ENCODE measurements at regions of chr9 and their contacts with region 1.

Region 1: GRCh38 chr9:21789541-21790037 is 12.8 kb upstream of the MTAP start:
- DNase-seq: peak; percentile 58
- CTCF ChIP-seq: peak; percentile 78

Region 2: DNA sequence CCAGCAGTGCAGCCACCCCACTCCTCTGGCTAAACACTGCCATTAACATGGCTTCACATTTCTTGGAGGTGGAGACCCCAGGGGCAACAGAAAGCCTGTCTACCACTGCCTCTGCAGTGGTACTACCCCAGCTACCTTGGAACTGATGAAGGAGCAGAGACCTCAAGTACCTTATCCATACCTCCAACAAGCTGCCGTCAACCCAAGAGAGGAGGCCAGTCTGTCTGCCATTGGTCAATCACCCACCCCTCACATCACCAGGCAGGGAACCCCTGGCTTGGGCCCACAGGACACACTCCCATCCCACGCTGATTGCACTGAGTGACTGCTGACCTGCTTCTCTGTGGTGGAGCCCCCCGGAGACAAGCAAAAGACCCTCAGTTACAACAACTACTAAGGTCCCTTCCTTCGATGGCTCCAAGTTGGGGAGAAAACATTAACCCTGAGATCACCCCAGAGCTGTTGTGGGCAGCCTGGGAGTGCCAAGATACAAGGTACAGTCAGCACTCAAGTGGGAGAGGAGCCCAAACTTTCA is 555.4 kb before region 1 on chr9:
- CTCF ChIA-PET with region 1: interaction called, 11 read pairs
- POLR2A ChIA-PET with region 1: no interaction called
- DNase-seq: no peak
- CTCF ChIP-seq: no peak

Region 3: GRCh38 chr9:21465859-21466518 is 323.6 kb before region 1 on chr9:
- CTCF ChIA-PET with region 1: interaction called, 24 read pairs
- POLR2A ChIA-PET with region 1: no interaction called
- DNase-seq: peak; percentile 54
- CTCF ChIP-seq: peak; percentile 78

Region 4: GRCh38 chr9:21542787-21543186 is 246.8 kb before region 1 on chr9:
- CTCF ChIA-PET with region 1: no interaction called
- POLR2A ChIA-PET with region 1: no interaction called
- DNase-seq: no peak
- CTCF ChIP-seq: no peak

Region 5: GRCh38 chr9:21677834-21678233 is 111.8 kb before region 1 on chr9:
- CTCF ChIA-PET with region 1: no interaction called
- POLR2A ChIA-PET with region 1: no interaction called
- DNase-seq: no peak
- CTCF ChIP-seq: no peak

Region 6: DNA sequence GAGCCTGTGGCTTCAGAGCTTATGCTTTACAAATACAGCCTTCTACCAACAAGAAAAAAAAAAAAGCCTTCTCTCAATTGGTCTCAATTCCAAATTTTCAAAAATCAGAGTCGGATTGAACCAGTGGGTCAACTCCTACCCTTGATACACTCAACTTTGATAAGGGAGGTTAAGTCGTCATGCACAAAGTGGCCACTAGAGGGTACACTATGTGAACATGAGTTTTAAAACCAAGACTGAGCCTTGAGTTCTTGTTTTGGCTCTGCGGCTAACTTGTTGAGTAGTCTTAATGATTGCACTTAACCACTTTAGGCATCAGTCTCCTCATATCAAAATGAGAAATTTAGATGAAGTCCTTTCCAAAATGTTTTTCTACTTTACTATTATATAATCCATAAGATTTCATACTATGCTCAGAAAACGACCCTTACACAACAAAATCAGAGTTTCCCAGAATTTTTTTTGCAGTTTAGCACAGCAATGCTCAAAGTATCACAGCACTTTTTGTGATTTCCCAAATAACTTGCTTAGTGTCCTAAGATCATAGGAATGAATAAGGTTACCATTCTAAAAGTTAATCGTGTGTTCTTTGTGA is 80.0 kb before region 1 on chr9:
- CTCF ChIA-PET with region 1: interaction called, 16 read pairs
- POLR2A ChIA-PET with region 1: no interaction called
- DNase-seq: peak; percentile 17
- CTCF ChIP-seq: peak; percentile 76

Region 7: GRCh38 chr9:21761309-21761901 is 28.2 kb before region 1 on chr9:
- CTCF ChIA-PET with region 1: no interaction called
- POLR2A ChIA-PET with region 1: no interaction called
- DNase-seq: peak; percentile 6
- CTCF ChIP-seq: no peak

Region 8: DNA sequence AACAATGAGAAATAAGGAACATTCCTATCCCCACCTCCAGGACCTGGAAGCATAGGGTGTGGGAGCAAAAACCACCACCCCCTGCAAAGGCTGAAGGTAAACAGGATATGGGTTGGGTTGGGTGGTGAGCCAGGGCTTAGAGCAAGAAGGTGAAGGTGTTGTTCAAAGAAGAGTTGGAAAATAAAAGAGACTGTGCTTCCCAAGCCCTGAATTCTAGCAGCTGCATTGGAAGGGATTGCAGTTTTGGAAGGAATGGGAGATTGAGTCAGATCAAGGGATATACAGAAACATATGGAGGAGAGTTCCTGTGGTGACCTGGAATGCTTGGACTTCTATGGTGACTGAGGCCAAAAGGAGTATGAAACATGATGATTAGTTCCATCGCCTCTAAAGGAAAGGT is 11.9 kb before region 1 on chr9:
- CTCF ChIA-PET with region 1: interaction called, 19 read pairs
- POLR2A ChIA-PET with region 1: no interaction called
- DNase-seq: no peak
- CTCF ChIP-seq: no peak

Region 9: DNA sequence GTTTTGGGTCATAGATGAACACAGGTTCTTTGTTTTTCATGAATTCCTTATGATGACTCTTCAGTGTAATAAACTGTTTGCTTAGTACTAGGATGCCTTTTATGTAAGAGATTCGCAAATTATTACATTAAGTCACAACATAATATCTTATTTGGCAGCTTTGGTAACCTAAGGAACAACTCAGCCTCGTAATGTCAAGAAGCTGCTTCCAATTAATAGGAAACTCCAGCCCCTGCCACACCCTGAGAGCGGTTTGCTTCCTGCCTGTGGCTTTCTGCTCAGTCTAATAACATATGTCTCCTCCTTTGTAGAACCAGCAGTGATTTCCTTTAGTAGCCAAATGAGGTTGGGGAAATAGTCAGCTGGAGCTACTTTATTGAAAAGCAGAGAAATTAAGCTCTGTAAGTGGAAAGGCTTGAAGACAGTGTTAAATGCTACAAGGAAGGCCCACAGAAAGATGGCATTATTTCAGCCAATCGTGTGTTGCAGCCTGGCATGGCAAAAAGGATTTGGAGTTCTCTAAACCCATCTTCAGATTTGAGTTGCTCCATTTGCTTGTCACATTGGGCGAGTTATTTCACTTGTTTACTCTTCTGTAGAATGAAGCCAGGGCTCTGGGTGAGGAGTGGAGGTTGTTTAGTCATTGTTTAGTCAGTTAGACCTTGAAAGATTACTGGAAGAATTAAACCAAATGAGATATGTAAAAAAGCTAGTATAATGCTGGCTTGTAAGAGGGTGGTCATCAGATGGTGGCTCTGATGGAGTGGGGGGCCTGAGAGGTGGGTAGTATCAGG is 66.9 kb after region 1 on chr9:
- CTCF ChIA-PET with region 1: no interaction called
- POLR2A ChIA-PET with region 1: no interaction called
- DNase-seq: no peak
- CTCF ChIP-seq: no peak

Measured in GM10248 (cell line).